Psoas muscle (tissue), 8 donors: ENCODE measurements at regions of chr10 and their contacts with region 1.

Region 1: GRCh38 chr10:71212318-71213126 is at the start of gene UNC5B:
- DNase-seq: peak; percentile 90 to 95
- ATAC-seq: peak; percentile 91 to 93 (median 92)
- H3K4me3 ChIP-seq: peak within 1 kb of the TSS; percentile 84
- H3K27ac ChIP-seq: peak within 1 kb of the TSS; percentile 77
- H3K4me1 ChIP-seq: peaks cover 13% of the 10 kb centered on the region
- H3K27me3 ChIP-seq: peaks cover 0 to 2% (median 0%) of the 10 kb centered on the region in 3 donors
- CTCF ChIP-seq: peak; percentile 51
- total RNA-seq, gene UNC5B: 1.1 to 5.7 (median 2.5) TPM

Region 2: GRCh38 chr10:70903262-70903921 is 309.1 kb before region 1 on chr10:
- intact Hi-C with region 1: loop called in 1 of 2 experiments (anchors 5 kb)
- DNase-seq: peak; percentile 57 to 77
- ATAC-seq: peak; percentile 57 to 82 (median 68)
- H3K4me3 ChIP-seq: no peak overlapping the region
- H3K27ac ChIP-seq: no peak overlapping the region
- H3K4me1 ChIP-seq: peaks cover 4% of the 10 kb centered on the region
- H3K27me3 ChIP-seq: peaks cover 0 to 3% (median 0%) of the 10 kb centered on the region in 3 donors
- CTCF ChIP-seq: peak; percentile 92

Region 3: DNA sequence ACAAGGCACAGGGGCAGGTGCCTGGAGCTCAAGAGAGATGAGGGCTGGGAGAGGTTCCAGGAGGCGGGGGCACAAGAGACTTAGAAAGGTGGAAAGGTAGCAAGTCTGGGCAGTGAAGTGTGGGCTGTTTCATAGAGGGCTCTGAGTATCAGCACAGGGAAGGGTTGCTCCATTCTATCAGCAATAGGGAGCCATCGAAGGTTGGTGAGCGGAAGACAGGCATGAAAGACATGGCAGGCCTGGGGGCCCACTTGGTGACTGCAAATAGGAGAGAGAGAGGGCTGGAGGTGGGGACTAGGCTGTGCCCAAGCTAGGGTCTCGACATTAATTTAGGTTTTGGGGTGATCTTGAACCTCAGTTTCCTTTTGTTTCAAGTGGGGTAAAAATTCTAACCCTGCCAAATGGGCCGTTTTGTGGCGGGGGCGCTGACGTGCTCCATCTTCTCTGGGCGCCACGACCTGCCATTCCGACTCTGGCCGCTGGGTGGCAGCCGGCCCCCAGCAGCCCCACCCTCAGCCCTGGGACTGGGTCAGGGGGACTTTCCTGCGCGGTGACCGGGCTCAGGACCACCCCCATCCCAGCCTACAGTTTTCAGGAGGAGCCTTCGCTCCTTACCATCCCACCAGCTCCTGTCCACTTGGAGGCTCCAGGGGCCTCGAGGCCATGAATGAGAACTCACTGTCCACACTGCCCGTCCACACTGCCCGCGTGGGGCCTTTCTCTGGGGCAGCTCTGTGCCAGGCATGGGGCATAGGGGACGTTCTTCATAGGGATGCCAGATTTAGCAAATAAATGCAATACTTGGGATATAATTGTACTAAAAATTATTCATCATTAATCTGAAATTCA is 286.9 kb before region 1 on chr10:
- intact Hi-C with region 1: loop called (anchors 1 to 5 kb)
- DNase-seq: peak; percentile 38 to 70
- ATAC-seq: peak; percentile 83 to 92 (median 86)
- H3K4me3 ChIP-seq: no peak overlapping the region
- H3K27ac ChIP-seq: no peak overlapping the region
- H3K4me1 ChIP-seq: no peaks in the 10 kb centered on the region
- H3K27me3 ChIP-seq: no peaks in the 10 kb centered on the region
- CTCF ChIP-seq: peak; percentile 98

Region 4: DNA sequence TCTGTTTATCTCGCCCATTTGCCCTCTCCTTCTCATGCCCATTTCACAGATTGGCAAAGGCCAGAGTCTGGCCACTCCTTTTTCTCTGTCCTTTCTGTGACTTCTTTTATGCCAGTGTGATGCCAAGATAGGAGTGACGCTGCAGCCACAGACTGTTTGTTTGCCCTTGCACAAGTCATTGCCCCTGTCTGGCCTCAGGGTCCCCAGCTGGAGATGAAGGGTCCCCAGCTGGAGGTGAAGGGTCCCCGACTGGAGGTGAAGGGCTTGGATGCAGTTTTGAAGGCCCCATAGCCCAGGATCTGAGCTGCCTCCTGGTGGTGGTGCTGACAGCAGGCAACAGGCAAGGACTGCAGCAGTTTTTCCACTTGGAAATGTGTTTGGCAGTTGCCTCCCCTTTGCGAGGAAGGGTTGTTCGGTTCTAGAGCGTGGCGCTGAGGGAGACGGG is 55.7 kb after region 1 on chr10:
- intact Hi-C with region 1: loop called (anchors 2 to 5 kb)
- DNase-seq: no peak
- ATAC-seq: peak; percentile 21 to 38 (median 30)
- H3K4me3 ChIP-seq: no peak overlapping the region
- H3K27ac ChIP-seq: peak overlapping the region; percentile 61
- H3K4me1 ChIP-seq: peaks cover 49% of the 10 kb centered on the region
- H3K27me3 ChIP-seq: no peaks in the 10 kb centered on the region
- CTCF ChIP-seq: peak; percentile 28

Region 5: DNA sequence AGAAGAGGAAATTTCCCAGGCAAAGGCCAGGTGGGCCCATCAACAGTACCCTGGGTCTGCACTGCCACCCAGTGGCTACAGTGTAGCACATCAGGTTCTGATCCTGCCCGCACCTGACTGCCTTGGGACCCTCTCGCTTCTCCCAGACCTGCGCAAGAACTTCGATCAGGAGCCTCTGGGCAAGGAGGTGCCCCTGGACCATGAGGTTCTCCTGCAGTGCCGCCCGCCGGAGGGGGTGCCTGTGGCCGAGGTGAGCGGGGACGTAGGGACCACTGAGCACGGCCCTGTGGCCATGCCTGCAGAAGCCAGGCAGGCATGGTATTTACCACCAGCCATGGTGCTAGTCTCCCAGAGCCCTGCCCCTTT is 72.6 kb after region 1 on chr10:
- intact Hi-C with region 1: loop called in 1 of 2 experiments (anchors 5 kb)
- DNase-seq: peak; percentile 48 to 76
- ATAC-seq: peak; percentile 79 to 90 (median 82)
- H3K4me3 ChIP-seq: no peak overlapping the region
- H3K27ac ChIP-seq: no peak overlapping the region
- H3K4me1 ChIP-seq: no peaks in the 10 kb centered on the region
- H3K27me3 ChIP-seq: peaks cover 0 to 4% (median 0%) of the 10 kb centered on the region in 3 donors
- CTCF ChIP-seq: peak; percentile 80

Region 6: GRCh38 chr10:72186258-72186981 is 973.9 kb after region 1 on chr10:
- intact Hi-C with region 1: no loop called
- DNase-seq: no peak
- ATAC-seq: peak in 3 of 4 donors; percentile 68 to 88 (median 75)
- H3K4me3 ChIP-seq: peak overlapping the region; percentile 35
- H3K27ac ChIP-seq: peak overlapping the region; percentile 74
- H3K4me1 ChIP-seq: peaks cover 7% of the 10 kb centered on the region
- H3K27me3 ChIP-seq: no peaks in the 10 kb centered on the region
- CTCF ChIP-seq: no peak